CD4-positive, alpha-beta T cell (primary cell): ENCODE measurements at regions of chr1 and their contacts with region 1.

Region 1: DNA sequence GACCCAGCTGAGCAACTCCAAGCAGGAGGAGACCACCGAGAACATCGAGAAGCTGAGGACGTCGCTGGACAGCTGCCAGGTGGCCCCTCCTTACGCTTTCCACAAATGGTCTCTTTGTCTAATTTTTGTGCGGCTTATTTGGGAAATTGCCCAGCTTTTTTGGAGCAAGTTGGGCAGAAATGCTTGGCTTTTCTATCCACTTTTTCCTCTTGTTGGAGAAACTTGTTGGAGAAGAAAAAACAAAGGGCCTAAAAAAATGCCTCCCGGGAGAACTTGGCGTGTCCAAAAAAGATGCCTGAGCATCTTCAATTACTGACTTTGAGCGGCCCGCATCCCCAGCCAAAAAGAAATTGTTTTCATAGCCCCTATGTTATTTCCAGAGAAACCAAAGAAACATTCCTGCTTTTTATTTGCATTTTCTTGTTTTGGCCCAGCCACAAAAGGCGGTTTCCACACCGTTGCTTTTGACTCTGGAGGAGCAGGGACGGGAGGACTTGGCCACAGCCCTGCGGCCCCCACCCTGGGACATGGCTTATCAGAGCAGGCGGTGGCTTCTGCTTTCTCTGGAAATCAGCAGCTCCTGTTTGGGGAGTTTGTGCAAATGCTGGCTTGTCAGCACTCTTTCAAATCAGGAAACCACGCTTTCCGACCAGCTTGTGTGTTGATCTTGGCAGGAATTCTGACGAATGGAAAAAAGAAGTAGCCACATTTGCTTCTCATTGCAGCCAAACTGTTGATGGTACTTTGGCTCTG is 81.2 kb upstream of the EFHD2 start:
- DNase-seq: no peak
- ATAC-seq: no peak
- H3K4me3 ChIP-seq: no peak overlapping the region
- H3K4me3 Mint-ChIP-seq: no peak overlapping the region
- H3K27ac ChIP-seq: no peak overlapping the region
- H3K27ac Mint-ChIP-seq: no peak overlapping the region
- H3K4me1 ChIP-seq: peaks cover 4% of the 10 kb centered on the region
- H3K4me1 Mint-ChIP-seq: no peaks in the 10 kb centered on the region
- H3K27me3 ChIP-seq: peaks cover 4 to 10% of the 10 kb centered on the region in 2 experiments
- H3K27me3 Mint-ChIP-seq: peaks cover 20% of the 10 kb centered on the region
- CTCF ChIP-seq: no peak

Region 2: GRCh38 chr1:15152318-15153183 is 176.0 kb before region 1 on chr1:
- CTCF ChIA-PET with region 1: no interaction called
- POLR2A ChIA-PET with region 1: no interaction called
- intact Hi-C with region 1: no loop called
- DNase-seq: peak in 2 of 14 experiments; percentile 37 to 44
- ATAC-seq: no peak
- H3K4me3 ChIP-seq: peak overlapping the region; percentile 25
- H3K4me3 Mint-ChIP-seq: no peak overlapping the region
- H3K27ac ChIP-seq: no peak overlapping the region
- H3K27ac Mint-ChIP-seq: no peak overlapping the region
- H3K4me1 ChIP-seq: peaks cover 26% of the 10 kb centered on the region
- H3K4me1 Mint-ChIP-seq: peaks cover 13% of the 10 kb centered on the region
- H3K27me3 ChIP-seq: peaks cover 35 to 61% of the 10 kb centered on the region in 2 experiments
- H3K27me3 Mint-ChIP-seq: peaks cover 70% of the 10 kb centered on the region
- CTCF ChIP-seq: no peak

Region 3: GRCh38 chr1:15236321-15236721 is 92.2 kb before region 1 on chr1:
- CTCF ChIA-PET with region 1: no interaction called
- POLR2A ChIA-PET with region 1: no interaction called
- intact Hi-C with region 1: no loop called
- DNase-seq: no peak
- ATAC-seq: no peak
- H3K4me3 ChIP-seq: no peak overlapping the region
- H3K4me3 Mint-ChIP-seq: no peak overlapping the region
- H3K27ac ChIP-seq: no peak overlapping the region
- H3K27ac Mint-ChIP-seq: no peak overlapping the region
- H3K4me1 ChIP-seq: no peaks in the 10 kb centered on the region
- H3K4me1 Mint-ChIP-seq: no peaks in the 10 kb centered on the region
- H3K27me3 ChIP-seq: peaks cover 2 to 3% of the 10 kb centered on the region in 2 experiments
- H3K27me3 Mint-ChIP-seq: peaks cover 16% of the 10 kb centered on the region
- CTCF ChIP-seq: no peak

Region 4: GRCh38 chr1:15364740-15365139 is 36.2 kb after region 1 on chr1:
- CTCF ChIA-PET with region 1: interaction called, 3 read pairs
- POLR2A ChIA-PET with region 1: no interaction called
- intact Hi-C with region 1: loop called in 1 of 2 experiments (anchors 5 kb)
- DNase-seq: peak in 3 of 14 experiments; percentile 9 to 42 (median 21)
- ATAC-seq: no peak
- H3K4me3 ChIP-seq: no peak overlapping the region
- H3K4me3 Mint-ChIP-seq: no peak overlapping the region
- H3K27ac ChIP-seq: no peak overlapping the region
- H3K27ac Mint-ChIP-seq: no peak overlapping the region
- H3K4me1 ChIP-seq: no peaks in the 10 kb centered on the region
- H3K4me1 Mint-ChIP-seq: no peaks in the 10 kb centered on the region
- H3K27me3 ChIP-seq: no peaks in the 10 kb centered on the region
- H3K27me3 Mint-ChIP-seq: no peaks in the 10 kb centered on the region
- CTCF ChIP-seq: no peak

Region 5: DNA sequence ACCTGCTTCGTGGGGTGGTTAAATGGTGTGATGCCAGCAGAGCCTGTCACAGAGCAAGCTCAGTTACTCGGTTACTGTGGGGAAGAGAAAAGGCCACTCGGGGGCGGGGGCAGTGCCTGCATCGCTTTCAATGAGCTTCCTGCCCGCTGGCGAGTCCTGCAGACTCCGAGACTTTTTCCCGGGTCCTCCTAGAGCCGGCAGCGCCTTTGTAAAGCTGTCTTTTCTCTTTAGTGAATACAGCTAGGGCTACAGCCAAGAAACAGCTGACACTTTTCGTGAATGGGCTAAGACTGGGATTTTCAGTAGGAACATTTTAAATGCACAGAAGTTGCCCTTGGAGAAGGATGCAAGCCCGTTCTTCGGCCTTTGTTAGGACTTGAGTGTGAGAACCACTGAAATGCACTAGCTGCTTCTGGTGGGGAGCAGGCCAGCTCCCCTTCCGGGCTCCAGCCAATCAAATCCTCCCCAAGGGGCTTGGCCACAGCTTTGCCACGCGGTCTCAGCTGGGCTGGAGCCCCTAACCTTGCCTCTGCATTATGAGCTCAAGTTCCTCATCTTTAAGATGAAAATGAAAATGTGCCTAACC is 57.7 kb after region 1 on chr1:
- CTCF ChIA-PET with region 1: interaction called, 7 read pairs
- POLR2A ChIA-PET with region 1: no interaction called
- intact Hi-C with region 1: loop called in 1 of 2 experiments (anchors 5 kb)
- DNase-seq: peak in 2 of 14 experiments; percentile 11 to 24
- ATAC-seq: no peak
- H3K4me3 ChIP-seq: no peak overlapping the region
- H3K4me3 Mint-ChIP-seq: no peak overlapping the region
- H3K27ac ChIP-seq: no peak overlapping the region
- H3K27ac Mint-ChIP-seq: no peak overlapping the region
- H3K4me1 ChIP-seq: peaks cover 12% of the 10 kb centered on the region
- H3K4me1 Mint-ChIP-seq: no peaks in the 10 kb centered on the region
- H3K27me3 ChIP-seq: peaks cover 5 to 11% of the 10 kb centered on the region in 2 experiments
- H3K27me3 Mint-ChIP-seq: peaks cover 47% of the 10 kb centered on the region
- CTCF ChIP-seq: no peak